CD8-positive, alpha-beta T cell (primary cell): ENCODE measurements at regions of chr2 and their contacts with region 1.

Region 1: GRCh38 chr2:202278944-202279343 is 13.4 kb downstream of the NOP58 start:
- DNase-seq: peak in 1 of 9 experiments; percentile 38
- ATAC-seq: no peak
- H3K4me3 ChIP-seq: no peak overlapping the region
- H3K4me3 Mint-ChIP-seq: no peak overlapping the region
- H3K27ac ChIP-seq: no peak overlapping the region
- H3K27ac Mint-ChIP-seq: no peak overlapping the region
- H3K4me1 ChIP-seq: no peaks in the 10 kb centered on the region
- H3K4me1 Mint-ChIP-seq: peaks cover 21% of the 10 kb centered on the region
- H3K27me3 ChIP-seq: no peaks in the 10 kb centered on the region
- H3K27me3 Mint-ChIP-seq: no peaks in the 10 kb centered on the region
- CTCF ChIP-seq: peak; percentile 11

Region 2: DNA sequence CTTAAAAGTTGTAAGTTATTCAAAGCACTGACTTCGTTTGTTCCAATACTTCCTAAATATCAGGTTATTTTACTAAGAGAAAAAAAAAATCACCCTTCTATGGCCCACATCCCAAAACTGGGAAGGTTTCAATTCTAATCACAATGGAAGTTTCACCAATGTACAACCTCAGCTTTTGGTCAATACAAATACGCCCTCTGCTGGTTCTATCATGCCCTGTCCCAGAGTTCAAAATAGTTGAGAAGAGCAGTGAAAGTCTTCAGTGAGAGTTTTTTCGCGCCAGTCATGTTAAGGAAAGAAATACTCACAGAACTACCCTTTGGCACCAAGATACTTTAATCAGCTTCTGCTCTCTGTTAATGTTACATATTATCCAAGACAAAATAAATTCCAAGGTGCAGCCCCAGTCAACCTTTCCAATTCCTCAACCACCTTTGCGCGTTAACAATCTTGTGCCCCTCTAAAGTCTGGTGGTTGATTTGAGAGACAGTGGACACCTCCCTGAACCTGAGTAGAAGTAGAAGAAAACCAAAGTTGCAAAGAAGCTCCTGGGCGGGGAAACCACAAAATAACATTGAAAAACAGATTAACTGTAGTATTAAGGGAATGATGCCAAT is 100.5 kb before region 1 on chr2:
- CTCF ChIA-PET with region 1: no interaction called
- POLR2A ChIA-PET with region 1: no interaction called
- intact Hi-C with region 1: no loop called
- DNase-seq: peak; percentile 11 to 70 (median 52)
- ATAC-seq: peak; percentile 61
- H3K4me3 ChIP-seq: no peak overlapping the region
- H3K4me3 Mint-ChIP-seq: no peak overlapping the region
- H3K27ac ChIP-seq: no peak overlapping the region
- H3K27ac Mint-ChIP-seq: no peak overlapping the region
- H3K4me1 ChIP-seq: no peaks in the 10 kb centered on the region
- H3K4me1 Mint-ChIP-seq: no peaks in the 10 kb centered on the region
- H3K27me3 ChIP-seq: no peaks in the 10 kb centered on the region
- H3K27me3 Mint-ChIP-seq: peaks cover 10% of the 10 kb centered on the region
- CTCF ChIP-seq: peak; percentile 88

Region 3: DNA sequence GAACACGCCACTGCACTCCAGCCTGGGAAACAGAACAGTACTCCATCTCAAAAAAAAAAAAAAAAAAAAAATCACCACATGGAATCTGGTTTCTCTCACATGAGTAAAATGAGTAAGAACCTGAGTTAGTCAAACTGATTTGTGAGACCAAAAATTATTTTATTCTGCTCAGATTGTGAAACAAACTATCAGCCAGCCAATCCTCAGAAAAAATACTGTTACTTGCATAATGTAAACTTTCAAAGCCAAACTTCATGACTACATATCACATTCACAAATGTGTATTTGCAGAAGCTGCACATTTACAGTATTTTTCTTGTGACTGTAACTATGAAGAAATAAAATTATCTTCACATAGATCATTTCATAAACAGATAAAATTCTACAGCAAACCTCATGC is 63.8 kb before region 1 on chr2:
- CTCF ChIA-PET with region 1: no interaction called
- POLR2A ChIA-PET with region 1: no interaction called
- intact Hi-C with region 1: loop called in 1 of 2 experiments (anchors 5 kb)
- DNase-seq: no peak
- ATAC-seq: no peak
- H3K4me3 ChIP-seq: no peak overlapping the region
- H3K4me3 Mint-ChIP-seq: no peak overlapping the region
- H3K27ac ChIP-seq: no peak overlapping the region
- H3K27ac Mint-ChIP-seq: no peak overlapping the region
- H3K4me1 ChIP-seq: no peaks in the 10 kb centered on the region
- H3K4me1 Mint-ChIP-seq: peaks cover 11% of the 10 kb centered on the region
- H3K27me3 ChIP-seq: no peaks in the 10 kb centered on the region
- H3K27me3 Mint-ChIP-seq: no peaks in the 10 kb centered on the region
- CTCF ChIP-seq: no peak

Region 4: DNA sequence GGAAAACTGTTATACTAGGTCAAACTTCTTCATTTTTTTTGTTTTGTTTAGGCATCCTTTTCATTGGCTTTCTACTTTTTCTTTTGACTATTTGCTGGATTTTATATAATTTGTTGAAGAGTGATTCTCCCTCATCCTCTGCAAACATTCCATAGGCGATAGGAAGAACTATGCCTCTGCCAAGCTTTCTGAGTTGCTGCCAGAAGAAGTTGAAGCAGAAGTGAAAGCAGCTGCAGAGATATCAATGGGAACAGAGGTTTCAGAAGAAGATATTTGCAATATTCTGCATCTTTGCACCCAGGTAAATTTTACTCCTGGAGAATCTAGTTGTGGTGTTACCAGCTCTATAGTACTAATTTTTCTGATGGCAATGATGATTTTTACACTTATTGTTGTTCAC is 12.0 kb after region 1 on chr2:
- CTCF ChIA-PET with region 1: interaction called, 4 read pairs
- POLR2A ChIA-PET with region 1: no interaction called
- intact Hi-C with region 1: loop called in 1 of 2 experiments (anchors 2 kb)
- DNase-seq: no peak
- ATAC-seq: no peak
- H3K4me3 ChIP-seq: no peak overlapping the region
- H3K4me3 Mint-ChIP-seq: no peak overlapping the region
- H3K27ac ChIP-seq: no peak overlapping the region
- H3K27ac Mint-ChIP-seq: no peak overlapping the region
- H3K4me1 ChIP-seq: no peaks in the 10 kb centered on the region
- H3K4me1 Mint-ChIP-seq: no peaks in the 10 kb centered on the region
- H3K27me3 ChIP-seq: no peaks in the 10 kb centered on the region
- H3K27me3 Mint-ChIP-seq: no peaks in the 10 kb centered on the region
- CTCF ChIP-seq: no peak